T-cell (primary cell): ENCODE measurements at regions of chr10 and their contacts with region 1.

Region 1: DNA sequence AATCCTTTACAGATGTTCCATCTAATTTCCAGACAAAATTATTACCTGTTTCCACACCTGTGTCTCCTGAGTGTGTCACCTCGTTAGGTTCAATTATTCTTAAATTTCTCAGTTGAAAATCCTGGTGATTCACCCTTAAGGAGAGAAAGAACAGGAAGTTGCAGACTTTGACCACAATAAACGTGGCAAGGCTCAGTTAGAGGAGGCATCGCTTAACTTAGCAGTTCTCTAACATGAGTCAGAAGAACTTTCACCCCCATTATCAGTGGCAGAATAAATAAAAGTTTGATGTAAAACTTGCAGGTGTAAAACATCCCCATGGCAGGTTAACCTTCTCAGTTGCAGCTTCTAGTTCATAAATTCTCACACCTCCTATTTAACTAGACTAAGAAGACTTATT is 8.3 kb downstream of the XPNPEP1 start:
- DNase-seq: peak in 22 of 35 experiments; percentile 19 to 77 (median 32)
- ATAC-seq: peak; percentile 97 to 98 (median 98)
- H3K4me3 ChIP-seq: no peak overlapping the region
- H3K4me3 Mint-ChIP-seq: peak overlapping the region; percentile 37 to 62 (median 52)
- H3K27ac ChIP-seq: peak overlapping the region; percentile 48
- H3K27ac Mint-ChIP-seq: peak overlapping the region; percentile 85 to 92
- H3K4me1 ChIP-seq: peaks cover 21 to 46% of the 10 kb centered on the region in 2 experiments
- H3K4me1 Mint-ChIP-seq: peaks cover 80 to 94% (median 88%) of the 10 kb centered on the region in 3 donors
- H3K27me3 ChIP-seq: no peaks in the 10 kb centered on the region
- H3K27me3 Mint-ChIP-seq: no peaks in the 10 kb centered on the region

Region 2: GRCh38 chr10:109633846-109634245 is 281.1 kb before region 1 on chr10:
- CTCF ChIA-PET with region 1: no interaction called
- POLR2A ChIA-PET with region 1: no interaction called
- DNase-seq: no peak
- ATAC-seq: no peak
- H3K4me3 ChIP-seq: no peak overlapping the region
- H3K4me3 Mint-ChIP-seq: no peak overlapping the region
- H3K27ac ChIP-seq: no peak overlapping the region
- H3K27ac Mint-ChIP-seq: no peak overlapping the region
- H3K4me1 ChIP-seq: no peaks in the 10 kb centered on the region
- H3K4me1 Mint-ChIP-seq: no peaks in the 10 kb centered on the region
- H3K27me3 ChIP-seq: peaks cover 0 to 2% of the 10 kb centered on the region in 2 experiments
- H3K27me3 Mint-ChIP-seq: no peaks in the 10 kb centered on the region

Region 3: DNA sequence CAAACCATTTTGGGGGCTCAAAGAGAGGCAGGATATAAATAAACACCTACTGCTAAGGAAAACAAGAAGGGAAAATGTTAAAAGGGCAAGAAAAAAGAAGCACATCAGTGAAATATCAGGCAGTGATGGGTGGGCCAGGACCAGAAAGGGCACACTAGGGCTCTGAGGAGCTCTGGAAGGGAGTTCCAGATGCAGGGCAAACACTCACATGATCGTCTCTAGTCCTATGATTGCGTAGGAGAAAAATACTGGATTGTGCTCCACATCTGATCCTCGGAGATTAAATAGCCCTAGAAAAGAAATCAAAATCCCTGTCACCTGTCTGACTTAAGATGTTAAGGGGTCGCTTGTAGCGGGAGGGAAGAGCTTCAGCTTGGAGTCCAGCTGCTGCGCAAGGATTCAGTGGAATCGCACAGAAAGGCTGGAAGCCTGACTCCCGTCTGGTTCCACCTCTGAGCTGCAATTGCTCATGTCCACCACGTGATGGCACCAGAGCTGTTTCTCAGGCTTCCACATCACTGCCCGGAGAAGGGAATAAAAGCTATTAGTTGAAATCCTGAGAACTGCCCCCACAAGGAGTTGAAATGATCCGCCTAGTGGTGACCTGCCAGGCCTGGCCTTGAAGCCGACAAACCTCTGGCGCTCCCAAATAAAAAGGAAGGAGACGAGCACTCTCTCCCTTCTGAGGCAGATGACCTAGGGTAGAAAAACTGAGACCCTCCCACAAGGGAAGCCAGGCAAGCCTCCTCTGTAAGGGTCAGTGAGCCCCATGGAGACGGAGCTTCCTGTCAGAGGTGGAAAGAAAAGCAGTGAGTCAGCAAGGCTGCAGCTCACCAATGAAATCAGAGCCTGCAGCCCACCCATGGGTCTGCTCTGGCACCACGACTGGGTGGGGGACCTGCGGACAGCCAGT is 30.9 kb before region 1 on chr10:
- CTCF ChIA-PET with region 1: interaction called, 4 to 11 read pairs
- POLR2A ChIA-PET with region 1: no interaction called
- DNase-seq: peak; percentile 23 to 83 (median 49)
- ATAC-seq: peak; percentile 65 to 68 (median 67)
- H3K4me3 ChIP-seq: no peak overlapping the region
- H3K4me3 Mint-ChIP-seq: no peak overlapping the region
- H3K27ac ChIP-seq: no peak overlapping the region
- H3K27ac Mint-ChIP-seq: no peak overlapping the region
- H3K4me1 ChIP-seq: peaks cover 0 to 8% of the 10 kb centered on the region in 2 experiments
- H3K4me1 Mint-ChIP-seq: peaks cover 10 to 12% (median 11%) of the 10 kb centered on the region in 3 donors
- H3K27me3 ChIP-seq: no peaks in the 10 kb centered on the region
- H3K27me3 Mint-ChIP-seq: no peaks in the 10 kb centered on the region